Gastrocnemius medialis (tissue), 4 donors: ENCODE measurements at regions of chr2 and their contacts with region 1.

Region 1: GRCh38 chr2:28751252-28751955 is at the start of gene PPP1CB:
- DNase-seq: peak; percentile 96 to 97
- ATAC-seq: peak; percentile 79
- H3K4me3 ChIP-seq: peak within 1 kb of the TSS; percentile 74 to 90 (median 88)
- H3K27ac ChIP-seq: peak within 1 kb of the TSS; percentile 96 to 99 (median 97)
- H3K4me1 ChIP-seq: peaks cover 49 to 57% of the 10 kb centered on the region in 2 donors
- H3K27me3 ChIP-seq: no peaks in the 10 kb centered on the region
- CTCF ChIP-seq: peak in 4 of 5 experiments; percentile 31 to 60 (median 39)
- POLR2A ChIP-seq: peak; percentile 90 to 92
- total RNA-seq, gene PPP1CB: 230 to 419 (median 317) TPM

Region 2: GRCh38 chr2:28566521-28567041 is 184.8 kb before region 1 on chr2:
- in situ Hi-C with region 1: no loop called
- intact Hi-C with region 1: loop called (anchors 2 kb)
- DNase-seq: peak; percentile 67 to 78
- ATAC-seq: peak; percentile 81 to 90
- H3K4me3 ChIP-seq: peak overlapping the region; percentile 56 to 78 (median 67)
- H3K27ac ChIP-seq: peak overlapping the region; percentile 80 to 89 (median 85)
- H3K4me1 ChIP-seq: peaks cover 16 to 19% of the 10 kb centered on the region in 2 donors
- H3K27me3 ChIP-seq: no peaks in the 10 kb centered on the region
- CTCF ChIP-seq: peak in 4 of 5 experiments; percentile 100
- POLR2A ChIP-seq: no peak

Region 3: DNA sequence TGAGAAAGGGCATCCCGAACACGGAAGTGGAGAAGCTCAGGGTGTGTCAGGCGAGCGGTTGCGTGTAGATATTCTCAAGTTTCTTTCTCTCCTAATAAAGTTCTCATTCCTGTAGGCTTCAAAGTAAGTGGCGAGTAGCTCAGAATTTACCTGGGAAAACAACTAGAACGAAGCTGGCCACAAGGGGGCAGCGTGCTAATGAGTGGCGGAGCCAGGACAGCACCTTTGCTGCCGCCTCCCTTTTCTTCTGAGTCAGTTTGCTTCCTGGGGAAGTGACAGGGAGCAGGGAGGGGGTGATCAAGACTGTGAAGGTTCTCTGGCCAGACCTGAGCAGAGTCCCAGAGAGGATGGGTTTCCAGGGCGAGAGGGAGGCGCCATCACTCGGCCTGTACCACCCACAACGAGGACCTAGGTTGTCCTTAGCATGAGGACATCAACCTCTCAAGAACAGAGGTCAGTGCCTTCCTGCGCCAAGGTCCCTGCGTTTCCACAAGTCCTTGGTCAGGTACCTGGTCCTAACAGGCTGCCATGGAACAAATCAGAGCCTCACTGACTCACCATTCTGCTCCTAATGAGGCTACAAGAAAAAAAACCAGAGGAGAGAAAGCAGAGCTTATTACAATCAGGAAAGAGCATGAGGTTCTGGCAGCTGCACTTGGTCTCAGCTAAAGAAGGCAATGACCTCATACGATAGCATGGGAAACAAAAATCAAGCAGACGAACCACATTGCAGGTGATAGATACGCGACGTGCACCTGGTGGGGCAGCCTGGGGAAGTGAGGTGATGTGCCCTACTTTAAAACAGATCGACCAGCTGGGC is 156.9 kb before region 1 on chr2:
- in situ Hi-C with region 1: loop called (anchors 5 to 10 kb)
- intact Hi-C with region 1: loop called (anchors 1 kb)
- DNase-seq: peak; percentile 87 to 93
- ATAC-seq: peak; percentile 90 to 93
- H3K4me3 ChIP-seq: peak overlapping the region; percentile 7 to 35 (median 19)
- H3K27ac ChIP-seq: peak overlapping the region; percentile 89 to 97 (median 92)
- H3K4me1 ChIP-seq: peaks cover 28 to 39% of the 10 kb centered on the region in 2 donors
- H3K27me3 ChIP-seq: no peaks in the 10 kb centered on the region
- CTCF ChIP-seq: peak; percentile 86 to 95 (median 90)
- POLR2A ChIP-seq: peak; percentile 42 to 65

Region 4: DNA sequence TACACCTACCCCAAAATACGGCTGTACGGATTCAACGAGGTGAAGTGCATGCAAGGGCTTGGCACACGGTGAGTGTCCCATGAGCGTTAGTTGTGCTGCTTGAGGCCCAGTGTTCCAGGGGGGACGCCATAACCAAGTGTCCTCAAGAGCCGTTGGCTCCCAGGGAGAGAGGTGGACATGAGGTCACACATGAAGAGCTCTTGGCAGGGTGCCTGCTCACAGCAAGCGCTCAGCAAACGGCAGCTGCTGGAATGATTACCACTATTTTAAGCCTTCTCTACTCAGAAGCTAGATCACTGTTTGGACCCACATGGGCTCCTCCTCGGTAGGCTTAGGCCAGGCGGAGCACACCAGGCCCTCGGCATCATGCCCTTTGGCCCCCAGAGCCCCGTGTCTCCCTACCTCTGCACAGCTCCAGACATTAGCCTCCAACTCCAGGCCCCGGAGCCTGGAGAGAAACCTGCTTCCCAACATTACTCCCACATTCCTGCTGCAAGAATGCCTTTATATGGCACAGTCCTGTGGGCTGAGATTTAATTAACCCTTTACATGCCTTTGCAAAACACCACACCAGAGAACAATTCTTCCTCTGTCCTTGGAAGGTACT is 68.2 kb before region 1 on chr2:
- in situ Hi-C with region 1: no loop called
- intact Hi-C with region 1: loop called (anchors 2 kb)
- DNase-seq: peak; percentile 80 to 93
- ATAC-seq: peak; percentile 91 to 94
- H3K4me3 ChIP-seq: no peak overlapping the region
- H3K27ac ChIP-seq: peak overlapping the region; percentile 78 to 86 (median 82)
- H3K4me1 ChIP-seq: peaks cover 34 to 62% of the 10 kb centered on the region in 2 donors
- H3K27me3 ChIP-seq: no peaks in the 10 kb centered on the region
- CTCF ChIP-seq: no peak
- POLR2A ChIP-seq: no peak

Region 5: GRCh38 chr2:28779001-28779400 is 27.6 kb after region 1 on chr2:
- in situ Hi-C with region 1: no loop called
- intact Hi-C with region 1: loop called (anchors 1 kb)
- DNase-seq: no peak
- ATAC-seq: no peak
- H3K4me3 ChIP-seq: no peak overlapping the region
- H3K27ac ChIP-seq: peak overlapping the region; percentile 75 to 87 (median 82)
- H3K4me1 ChIP-seq: peaks cover 47 to 60% of the 10 kb centered on the region in 2 donors
- H3K27me3 ChIP-seq: no peaks in the 10 kb centered on the region
- CTCF ChIP-seq: no peak
- POLR2A ChIP-seq: no peak